Naive thymus-derived CD4-positive, alpha-beta T cell (primary cell): ENCODE measurements at regions of chr6 and their contacts with region 1.

Region 1: GRCh38 chr6:69835414-69836179 is 30.8 kb upstream of the COL19A1 start:
- DNase-seq: peak in 4 of 9 donors; percentile 11 to 41 (median 26)
- ATAC-seq: peak; percentile 84
- H3K4me3 ChIP-seq: no peak overlapping the region
- H3K4me3 Mint-ChIP-seq: peak overlapping the region in 1 of 10 donors; percentile 21
- H3K27ac ChIP-seq: no peak overlapping the region
- H3K27ac Mint-ChIP-seq: no peak overlapping the region
- H3K4me1 ChIP-seq: no peaks in the 10 kb centered on the region
- H3K4me1 Mint-ChIP-seq: peaks cover 0 to 7% (median 2%) of the 10 kb centered on the region in 7 donors
- H3K27me3 ChIP-seq: no peaks in the 10 kb centered on the region
- H3K27me3 Mint-ChIP-seq: peaks cover 0 to 52% (median 11%) of the 10 kb centered on the region in 5 donors

Region 2: GRCh38 chr6:69813508-69813907 is 22.1 kb before region 1 on chr6:
- CTCF ChIA-PET with region 1: interaction called, 8 read pairs
- POLR2A ChIA-PET with region 1: interaction called, 5 read pairs
- intact Hi-C with region 1: loop called in 1 of 2 experiments (anchors 1 kb)
- DNase-seq: peak in 1 of 9 donors; percentile 15
- ATAC-seq: peak; percentile 79
- H3K4me3 ChIP-seq: peak overlapping the region; percentile 14
- H3K4me3 Mint-ChIP-seq: peak overlapping the region; percentile 25 to 74 (median 62)
- H3K27ac ChIP-seq: peak overlapping the region; percentile 65
- H3K27ac Mint-ChIP-seq: peak overlapping the region; percentile 71 to 98 (median 87)
- H3K4me1 ChIP-seq: peaks cover 26 to 49% of the 10 kb centered on the region in 2 donors
- H3K4me1 Mint-ChIP-seq: peaks cover 35 to 71% (median 59%) of the 10 kb centered on the region in 7 donors
- H3K27me3 ChIP-seq: no peaks in the 10 kb centered on the region
- H3K27me3 Mint-ChIP-seq: no peaks in the 10 kb centered on the region

Region 3: GRCh38 chr6:69887026-69887425 is 51.4 kb after region 1 on chr6:
- CTCF ChIA-PET with region 1: no interaction called
- POLR2A ChIA-PET with region 1: no interaction called
- intact Hi-C with region 1: no loop called
- DNase-seq: peak in 1 of 9 donors; percentile 16
- ATAC-seq: no peak
- H3K4me3 ChIP-seq: no peak overlapping the region
- H3K4me3 Mint-ChIP-seq: no peak overlapping the region
- H3K27ac ChIP-seq: no peak overlapping the region
- H3K27ac Mint-ChIP-seq: no peak overlapping the region
- H3K4me1 ChIP-seq: no peaks in the 10 kb centered on the region
- H3K4me1 Mint-ChIP-seq: peaks cover 0 to 1% (median 0%) of the 10 kb centered on the region in 7 donors
- H3K27me3 ChIP-seq: peaks cover 0 to 4% of the 10 kb centered on the region in 2 donors
- H3K27me3 Mint-ChIP-seq: peaks cover 6 to 20% (median 12%) of the 10 kb centered on the region in 5 donors

Region 4: GRCh38 chr6:69942485-69942884 is 106.9 kb after region 1 on chr6:
- CTCF ChIA-PET with region 1: no interaction called
- POLR2A ChIA-PET with region 1: no interaction called
- intact Hi-C with region 1: loop called in 1 of 2 experiments (anchors 5 kb)
- DNase-seq: no peak
- ATAC-seq: no peak
- H3K4me3 ChIP-seq: no peak overlapping the region
- H3K4me3 Mint-ChIP-seq: no peak overlapping the region
- H3K27ac ChIP-seq: no peak overlapping the region
- H3K27ac Mint-ChIP-seq: no peak overlapping the region
- H3K4me1 ChIP-seq: no peaks in the 10 kb centered on the region
- H3K4me1 Mint-ChIP-seq: peaks cover 0 to 2% (median 0%) of the 10 kb centered on the region in 7 donors
- H3K27me3 ChIP-seq: no peaks in the 10 kb centered on the region
- H3K27me3 Mint-ChIP-seq: peaks cover 7 to 32% (median 27%) of the 10 kb centered on the region in 5 donors

Region 5: GRCh38 chr6:70107852-70108629 is 272.4 kb after region 1 on chr6:
- CTCF ChIA-PET with region 1: no interaction called
- POLR2A ChIA-PET with region 1: no interaction called
- intact Hi-C with region 1: loop called (anchors 1 to 2 kb)
- DNase-seq: peak in 6 of 9 donors; percentile 4 to 43 (median 17)
- ATAC-seq: no peak
- H3K4me3 ChIP-seq: no peak overlapping the region
- H3K4me3 Mint-ChIP-seq: no peak overlapping the region
- H3K27ac ChIP-seq: no peak overlapping the region
- H3K27ac Mint-ChIP-seq: no peak overlapping the region
- H3K4me1 ChIP-seq: no peaks in the 10 kb centered on the region
- H3K4me1 Mint-ChIP-seq: no peaks in the 10 kb centered on the region
- H3K27me3 ChIP-seq: no peaks in the 10 kb centered on the region
- H3K27me3 Mint-ChIP-seq: peaks cover 0 to 21% (median 14%) of the 10 kb centered on the region in 5 donors